ENCODE measurements at regions of chr2 and their contacts with region 1.

Region 1: DNA sequence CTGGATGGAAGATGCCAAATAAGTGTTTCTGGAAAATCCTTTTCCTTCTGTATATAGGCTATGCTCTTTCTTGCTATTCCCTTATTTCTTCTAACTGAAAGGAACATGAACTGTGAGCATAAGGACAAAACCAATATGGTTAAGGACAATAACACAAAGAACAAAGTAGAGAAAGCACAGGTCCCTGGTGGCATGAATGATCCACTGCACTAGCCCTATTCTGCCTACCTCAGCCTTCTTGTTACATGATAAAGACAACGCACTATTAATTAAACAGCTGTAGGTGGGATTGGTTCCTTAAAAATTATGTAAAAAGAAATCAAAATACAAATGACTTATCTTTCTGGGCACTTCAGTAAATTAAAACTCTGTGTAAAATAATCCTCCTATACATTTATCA is 1.9 kb upstream of the WDR75 start:
- DNase-seq: no peak

Region 2: DNA sequence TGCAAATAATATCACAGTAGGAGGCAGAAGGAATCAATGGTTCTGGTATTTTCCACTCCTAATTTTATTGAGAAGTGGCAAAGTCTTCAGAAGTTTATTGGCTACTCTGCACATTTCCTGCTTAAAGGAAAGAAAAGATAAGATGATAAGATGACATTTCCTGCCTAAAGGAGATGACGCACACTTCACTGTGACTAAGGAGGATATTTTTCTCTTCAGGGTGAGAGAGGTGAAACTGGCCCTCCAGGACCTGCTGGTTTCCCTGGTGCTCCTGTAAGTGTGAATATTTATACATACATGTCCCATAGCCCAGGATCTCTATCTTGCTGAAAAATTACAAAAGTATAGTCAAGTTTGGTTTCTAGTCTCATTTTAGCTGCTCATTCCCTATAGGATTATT is 437.3 kb before region 1 on chr2:
- intact Hi-C with region 1: no loop called
- DNase-seq: no peak

Region 3: DNA sequence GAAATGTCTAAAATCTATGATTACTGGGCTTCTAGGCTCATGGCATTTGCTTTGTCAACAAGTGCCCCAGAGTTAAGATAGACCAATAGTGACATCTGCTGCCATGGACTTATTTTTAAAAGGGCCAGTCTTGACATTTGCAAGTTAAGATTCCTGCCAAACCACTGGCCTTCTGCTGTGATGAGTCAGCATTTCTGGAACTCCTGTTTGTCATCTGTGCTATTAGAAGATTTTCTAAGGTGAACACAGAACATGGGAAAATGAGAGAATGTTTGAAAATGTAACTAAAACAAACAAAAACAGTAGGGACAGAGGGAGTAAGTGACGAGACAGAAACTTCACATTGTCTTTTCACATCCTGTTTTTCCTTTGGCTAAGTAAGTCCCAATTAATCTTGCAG is 91.8 kb before region 1 on chr2:
- intact Hi-C with region 1: no loop called
- DNase-seq: no peak

Region 4: GRCh38 chr2:189391201-189391600 is 48.1 kb before region 1 on chr2:
- intact Hi-C with region 1: loop called (anchors 2 kb)
- DNase-seq: no peak